GM10248 (cell line): ENCODE measurements at regions of chr1 and their contacts with region 1.

Region 1: GRCh38 chr1:169094897-169095569 is 11.5 kb upstream of the ATP1B1 start:
- DNase-seq: no peak
- CTCF ChIP-seq: no peak

Region 2: GRCh38 chr1:169108863-169109560 is 14.0 kb after region 1 on chr1:
- CTCF ChIA-PET with region 1: interaction called, 25 read pairs
- POLR2A ChIA-PET with region 1: interaction called, 5 read pairs
- DNase-seq: peak; percentile 45
- CTCF ChIP-seq: peak; percentile 59

Region 3: GRCh38 chr1:169295425-169295824 is 200.4 kb after region 1 on chr1:
- CTCF ChIA-PET with region 1: no interaction called
- POLR2A ChIA-PET with region 1: no interaction called
- DNase-seq: no peak
- CTCF ChIP-seq: no peak

Region 4: DNA sequence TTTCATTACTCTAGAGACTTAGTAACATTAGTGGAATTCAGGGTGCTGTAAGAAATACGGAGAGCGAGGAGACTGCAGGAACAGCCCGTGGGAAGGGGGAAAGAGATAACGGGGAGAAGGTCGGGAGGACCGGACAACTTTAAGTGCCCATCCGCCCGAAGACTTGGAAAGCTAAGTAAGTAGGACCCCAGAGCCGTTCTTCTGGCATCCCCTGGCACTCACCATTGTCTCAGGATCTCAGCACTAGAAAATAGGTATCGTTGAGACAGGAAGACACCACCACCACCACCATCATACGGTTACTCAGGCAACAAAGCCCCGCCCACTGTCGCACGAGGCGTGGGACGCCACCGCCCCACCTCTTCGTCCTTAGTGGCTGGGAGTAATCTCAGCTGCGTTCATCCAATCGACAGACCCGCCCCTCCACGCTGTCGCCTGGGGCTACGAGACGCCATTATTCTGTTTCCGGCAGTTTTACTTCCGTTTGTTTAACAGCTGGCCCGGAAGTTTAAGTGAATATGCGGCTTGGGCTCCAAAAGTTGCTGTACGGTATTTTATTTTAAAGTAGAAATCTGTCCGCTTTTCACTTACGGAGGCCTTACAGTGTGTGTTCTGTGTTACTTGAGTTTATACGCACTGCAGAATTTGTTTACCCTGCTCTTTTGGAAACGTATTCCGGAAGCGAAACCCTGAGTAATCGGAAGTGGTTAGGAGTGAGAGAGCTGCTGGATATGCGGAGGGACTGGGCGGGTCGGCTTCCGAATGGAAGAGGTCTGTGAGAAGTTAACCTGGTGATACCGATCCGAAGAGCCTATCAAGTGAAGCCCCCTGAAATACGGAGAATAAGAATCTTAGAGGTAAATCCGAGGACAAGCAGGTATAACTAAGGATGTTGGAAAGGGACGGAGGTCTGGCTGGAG is 272.7 kb after region 1 on chr1 and contains the starts of genes BLZF1 and NME7:
- CTCF ChIA-PET with region 1: no interaction called
- POLR2A ChIA-PET with region 1: no interaction called
- DNase-seq: peak; percentile 91
- CTCF ChIP-seq: no peak